ENCODE measurements at regions of chr4 and their contacts with region 1.

Region 1: GRCh38 chr4:107719922-107720722 is at the start of gene PAPSS1:
- DNase-seq: peak; percentile 96
- ATAC-seq: peak; percentile 90
- H3K4me3 ChIP-seq: peak within 1 kb of the TSS; percentile 93
- H3K27ac ChIP-seq: peak within 1 kb of the TSS; percentile 82
- H3K4me1 ChIP-seq: peaks cover 24% of the 10 kb centered on the region
- H3K27me3 ChIP-seq: no peaks in the 10 kb centered on the region
- CTCF ChIP-seq: no peak
- total RNA-seq, gene PAPSS1: 24.5 and 28.0 TPM in 2 replicates

Region 2: DNA sequence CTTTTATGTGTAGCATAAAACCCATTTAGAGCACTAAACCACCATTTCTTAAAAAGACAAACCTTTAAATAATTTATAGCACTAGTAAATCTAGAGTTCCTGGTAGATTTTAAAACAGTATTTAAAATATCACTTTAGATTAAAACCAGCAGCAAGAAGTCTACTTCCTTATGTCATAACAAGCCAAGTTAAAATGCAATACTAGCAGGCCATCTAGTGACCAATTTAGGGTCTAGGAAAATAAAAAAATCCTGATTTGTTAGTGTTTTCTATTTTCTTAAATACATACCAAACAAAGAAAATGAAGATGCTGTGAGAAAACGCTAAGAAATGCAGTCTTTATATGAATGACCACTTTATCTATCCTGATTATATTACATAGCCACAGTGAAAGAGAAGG is 54.0 kb before region 1 on chr4:
- CTCF ChIA-PET with region 1: no interaction called
- POLR2A ChIA-PET with region 1: no interaction called
- intact Hi-C with region 1: loop called (anchors 5 kb)
- DNase-seq: peak; percentile 23
- ATAC-seq: 0 out of 2 replicates have a peak, but pooled peaks have one; percentile 20
- H3K4me3 ChIP-seq: no peak overlapping the region
- H3K27ac ChIP-seq: no peak overlapping the region
- H3K4me1 ChIP-seq: no peaks in the 10 kb centered on the region
- H3K27me3 ChIP-seq: no peaks in the 10 kb centered on the region
- CTCF ChIP-seq: peak; percentile 45

Region 3: DNA sequence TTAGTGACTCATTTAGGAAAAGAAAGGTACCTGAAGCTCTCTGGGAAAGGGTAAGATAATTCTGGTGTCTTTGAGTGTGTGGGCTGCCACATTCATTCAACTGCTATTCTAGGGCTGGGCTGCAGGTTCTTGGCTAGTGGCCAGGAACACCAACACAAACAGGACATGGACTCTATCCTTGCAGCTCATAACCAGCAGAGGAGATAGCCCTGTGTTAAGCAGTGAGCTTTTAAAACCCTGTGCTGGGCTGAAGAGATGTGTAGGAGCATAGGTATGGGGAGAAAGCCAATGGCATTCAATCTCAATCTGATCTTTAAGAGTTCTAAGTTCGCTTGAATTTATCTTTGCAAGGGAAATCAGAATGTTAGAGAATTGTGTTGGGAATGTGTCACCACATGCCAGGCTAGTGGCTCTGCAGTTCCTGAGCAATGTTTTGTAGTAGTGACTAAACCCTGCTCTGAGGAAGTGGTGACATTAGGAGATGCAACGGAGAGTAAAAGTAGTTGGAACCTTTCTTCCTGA is 143.8 kb after region 1 on chr4:
- CTCF ChIA-PET with region 1: no interaction called
- POLR2A ChIA-PET with region 1: interaction called, 13 read pairs
- intact Hi-C with region 1: no loop called
- DNase-seq: peak; percentile 72
- ATAC-seq: peak; percentile 66
- H3K4me3 ChIP-seq: no peak overlapping the region
- H3K27ac ChIP-seq: peak overlapping the region; percentile 77
- H3K4me1 ChIP-seq: peaks cover 29% of the 10 kb centered on the region
- H3K27me3 ChIP-seq: no peaks in the 10 kb centered on the region
- CTCF ChIP-seq: no peak

Region 4: DNA sequence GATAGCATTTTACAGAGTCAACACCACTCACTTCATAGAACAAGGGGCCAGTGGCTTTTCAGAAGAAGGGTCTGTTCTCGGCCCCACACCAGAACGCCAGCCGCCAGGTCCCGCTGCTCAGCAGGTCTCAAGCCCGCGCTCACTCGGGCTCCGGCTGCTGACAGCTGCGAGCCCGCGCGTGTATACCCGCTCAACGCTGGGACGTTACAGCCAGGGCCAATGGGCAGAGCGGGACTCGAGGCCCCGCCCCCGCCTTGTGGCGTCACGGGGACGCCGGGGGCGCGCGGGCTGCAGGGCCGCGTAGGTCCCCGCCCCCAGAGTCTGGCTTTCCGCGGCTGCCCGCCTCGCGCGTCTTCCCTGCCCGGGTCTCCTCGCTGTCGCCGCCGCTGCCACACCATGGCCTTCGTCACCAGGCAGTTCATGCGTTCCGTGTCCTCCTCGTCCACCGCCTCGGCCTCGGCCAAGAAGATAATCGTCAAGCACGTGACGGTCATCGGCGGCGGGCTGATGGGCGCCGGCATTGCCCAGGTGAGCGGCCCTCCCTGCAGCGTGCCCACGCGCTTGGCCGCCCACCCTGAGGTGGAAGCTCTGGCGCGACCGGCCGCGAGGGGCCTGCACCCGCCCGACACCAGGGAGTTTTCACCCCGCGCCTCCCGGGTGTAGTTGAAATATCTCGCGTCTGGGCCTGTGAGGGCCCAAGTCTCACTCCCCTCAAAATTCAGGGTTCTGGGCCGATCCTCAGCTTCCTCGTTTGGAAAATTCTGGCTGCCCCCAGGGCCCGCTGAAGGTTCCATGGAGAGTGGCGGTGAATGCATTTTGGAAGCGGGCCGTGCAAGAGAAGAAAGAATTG is 269.6 kb after region 1 on chr4 and contains the start of gene HADH:
- CTCF ChIA-PET with region 1: no interaction called
- POLR2A ChIA-PET with region 1: no interaction called
- intact Hi-C with region 1: loop called (anchors 1 kb)
- DNase-seq: peak; percentile 92
- ATAC-seq: peak; percentile 98
- H3K4me3 ChIP-seq: peak within 1 kb of the TSS; percentile 98
- H3K27ac ChIP-seq: peak within 1 kb of the TSS; percentile 25
- H3K4me1 ChIP-seq: peaks cover 20% of the 10 kb centered on the region
- H3K27me3 ChIP-seq: no peaks in the 10 kb centered on the region
- CTCF ChIP-seq: no peak
- total RNA-seq, gene HADH: 10.8 and 17.5 TPM in 2 replicates

Measured in PC-3 (cell line).